Naive thymus-derived CD4-positive, alpha-beta T cell (primary cell): ENCODE measurements at regions of chr4 and their contacts with region 1.

Region 1: DNA sequence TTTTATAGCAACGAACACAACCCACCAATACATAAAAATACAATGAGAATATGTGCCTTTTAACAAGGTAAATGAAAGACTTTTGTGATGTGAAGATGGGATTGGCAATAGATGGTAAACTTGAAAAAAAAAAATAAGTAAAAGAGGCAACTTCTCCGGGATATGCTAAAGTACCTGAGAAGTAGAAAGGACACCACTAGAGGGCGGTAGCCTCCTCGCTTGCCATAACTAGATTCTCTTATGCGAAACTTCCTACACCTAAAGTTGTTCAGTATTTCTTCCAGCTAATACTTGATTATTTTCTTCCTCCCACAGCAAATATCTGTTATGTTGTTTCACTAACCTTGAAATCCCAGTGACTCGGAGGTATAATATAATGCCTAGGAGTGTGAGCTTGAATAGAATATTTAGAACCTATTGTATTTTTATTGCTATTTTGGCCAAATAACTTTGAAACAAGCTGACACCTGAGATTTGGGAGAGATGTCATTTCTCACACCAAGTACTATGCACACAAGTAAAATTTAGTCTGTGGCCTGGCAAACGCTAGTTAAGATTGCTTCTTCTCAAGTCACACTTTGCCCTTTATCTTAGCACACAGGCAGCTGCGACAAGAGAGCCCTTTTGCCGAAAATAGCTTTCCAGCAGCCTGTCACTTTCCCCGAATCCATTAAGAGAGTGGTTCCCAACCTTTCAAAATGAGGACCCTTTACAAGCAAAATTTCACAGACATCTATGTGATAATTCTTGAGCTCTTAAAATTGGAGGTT is 44.9 kb upstream of the PDLIM5 start:
- DNase-seq: peak; percentile 6 to 64 (median 48)
- ATAC-seq: peak; percentile 80
- H3K4me3 ChIP-seq: no peak overlapping the region
- H3K4me3 Mint-ChIP-seq: no peak overlapping the region
- H3K27ac ChIP-seq: no peak overlapping the region
- H3K27ac Mint-ChIP-seq: no peak overlapping the region
- H3K4me1 ChIP-seq: no peaks in the 10 kb centered on the region
- H3K4me1 Mint-ChIP-seq: no peaks in the 10 kb centered on the region
- H3K27me3 ChIP-seq: no peaks in the 10 kb centered on the region
- H3K27me3 Mint-ChIP-seq: peaks cover 0 to 21% (median 5%) of the 10 kb centered on the region in 5 donors

Region 2: GRCh38 chr4:93764639-93765246 is 642.1 kb before region 1 on chr4:
- CTCF ChIA-PET with region 1: no interaction called
- POLR2A ChIA-PET with region 1: no interaction called
- intact Hi-C with region 1: no loop called
- DNase-seq: no peak
- ATAC-seq: no peak
- H3K4me3 ChIP-seq: no peak overlapping the region
- H3K4me3 Mint-ChIP-seq: no peak overlapping the region
- H3K27ac ChIP-seq: no peak overlapping the region
- H3K27ac Mint-ChIP-seq: no peak overlapping the region
- H3K4me1 ChIP-seq: no peaks in the 10 kb centered on the region
- H3K4me1 Mint-ChIP-seq: no peaks in the 10 kb centered on the region
- H3K27me3 ChIP-seq: no peaks in the 10 kb centered on the region
- H3K27me3 Mint-ChIP-seq: peaks cover 0 to 5% (median 0%) of the 10 kb centered on the region in 5 donors

Region 3: GRCh38 chr4:94304365-94304971 is 102.4 kb before region 1 on chr4:
- CTCF ChIA-PET with region 1: no interaction called
- POLR2A ChIA-PET with region 1: no interaction called
- intact Hi-C with region 1: loop called in 1 of 2 experiments (anchors 5 kb)
- DNase-seq: peak in 4 of 9 donors; percentile 7 to 14 (median 11)
- ATAC-seq: no peak
- H3K4me3 ChIP-seq: no peak overlapping the region
- H3K4me3 Mint-ChIP-seq: no peak overlapping the region
- H3K27ac ChIP-seq: no peak overlapping the region
- H3K27ac Mint-ChIP-seq: no peak overlapping the region
- H3K4me1 ChIP-seq: no peaks in the 10 kb centered on the region
- H3K4me1 Mint-ChIP-seq: no peaks in the 10 kb centered on the region
- H3K27me3 ChIP-seq: no peaks in the 10 kb centered on the region
- H3K27me3 Mint-ChIP-seq: no peaks in the 10 kb centered on the region

Region 4: DNA sequence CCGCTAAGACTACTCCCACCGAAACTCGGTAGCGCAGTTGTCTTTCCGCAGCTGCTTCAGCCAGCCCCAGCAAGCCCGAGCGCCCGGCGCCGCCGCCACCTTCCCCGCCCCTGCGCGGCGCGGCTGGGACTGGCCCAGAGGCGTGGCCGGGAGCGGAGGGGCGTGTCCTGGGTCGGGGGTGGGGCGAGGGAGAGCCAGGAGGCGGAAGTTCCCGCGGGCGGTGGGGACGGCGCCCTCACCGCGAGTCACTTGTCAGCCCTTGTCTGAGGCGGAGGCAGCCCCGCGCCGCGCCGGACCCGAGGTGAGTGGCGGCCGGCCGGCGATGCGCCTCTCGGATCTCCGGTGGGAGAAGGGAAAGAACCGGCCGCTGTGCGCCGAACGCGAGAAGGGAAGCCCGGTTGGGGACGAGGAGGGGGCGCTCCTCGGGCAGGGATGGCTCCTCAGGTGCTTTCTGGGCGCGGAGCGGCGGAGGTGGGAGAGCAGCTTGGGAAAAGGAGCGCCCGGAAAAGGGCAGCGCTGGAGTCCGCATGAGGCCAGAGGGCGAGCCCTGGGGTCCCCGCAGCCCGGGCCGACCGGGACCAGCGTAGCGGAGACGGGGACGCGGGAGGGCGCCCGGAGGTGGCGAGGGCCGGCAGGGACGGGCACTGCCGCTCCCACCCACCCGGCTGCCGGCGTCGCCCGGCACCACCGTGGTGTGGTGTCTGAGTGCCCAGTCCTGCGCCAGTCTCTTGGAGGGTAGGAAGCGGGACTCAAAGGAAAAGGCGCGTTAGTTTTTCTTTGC is 45.0 kb after region 1 on chr4 and contains the start of gene PDLIM5:
- CTCF ChIA-PET with region 1: no interaction called
- POLR2A ChIA-PET with region 1: no interaction called
- intact Hi-C with region 1: loop called (anchors 1 to 5 kb)
- DNase-seq: peak; percentile 80 to 93 (median 88)
- ATAC-seq: peak; percentile 98
- H3K4me3 ChIP-seq: peak within 1 kb of the TSS; percentile 78
- H3K4me3 Mint-ChIP-seq: peak within 1 kb of the TSS; percentile 87 to 95 (median 92)
- H3K27ac ChIP-seq: peak within 1 kb of the TSS; percentile 63
- H3K27ac Mint-ChIP-seq: peak within 1 kb of the TSS; percentile 58 to 86 (median 77)
- H3K4me1 ChIP-seq: peaks cover 5 to 17% of the 10 kb centered on the region in 2 donors
- H3K4me1 Mint-ChIP-seq: peaks cover 16 to 33% (median 29%) of the 10 kb centered on the region in 7 donors
- H3K27me3 ChIP-seq: peaks cover 0 to 3% of the 10 kb centered on the region in 2 donors
- H3K27me3 Mint-ChIP-seq: peaks cover 10 to 43% (median 21%) of the 10 kb centered on the region in 5 donors
- total RNA-seq, gene PDLIM5: 14.4 to 61.7 (median 31.4) TPM

Region 5: GRCh38 chr4:94595879-94596483 is 189.1 kb after region 1 on chr4:
- CTCF ChIA-PET with region 1: interaction called, 9 read pairs
- POLR2A ChIA-PET with region 1: no interaction called
- intact Hi-C with region 1: loop called (anchors 1 kb)
- DNase-seq: peak in 5 of 9 donors; percentile 26 to 41 (median 31)
- ATAC-seq: peak; percentile 65
- H3K4me3 ChIP-seq: no peak overlapping the region
- H3K4me3 Mint-ChIP-seq: no peak overlapping the region
- H3K27ac ChIP-seq: no peak overlapping the region
- H3K27ac Mint-ChIP-seq: no peak overlapping the region
- H3K4me1 ChIP-seq: no peaks in the 10 kb centered on the region
- H3K4me1 Mint-ChIP-seq: no peaks in the 10 kb centered on the region
- H3K27me3 ChIP-seq: no peaks in the 10 kb centered on the region
- H3K27me3 Mint-ChIP-seq: no peaks in the 10 kb centered on the region

Region 6: GRCh38 chr4:95095348-95095974 is 688.6 kb after region 1 on chr4:
- CTCF ChIA-PET with region 1: no interaction called
- POLR2A ChIA-PET with region 1: no interaction called
- intact Hi-C with region 1: loop called in 1 of 2 experiments (anchors 5 kb)
- DNase-seq: peak in 2 of 9 donors; percentile 17 to 29
- ATAC-seq: no peak
- H3K4me3 ChIP-seq: no peak overlapping the region
- H3K4me3 Mint-ChIP-seq: no peak overlapping the region
- H3K27ac ChIP-seq: no peak overlapping the region
- H3K27ac Mint-ChIP-seq: no peak overlapping the region
- H3K4me1 ChIP-seq: no peaks in the 10 kb centered on the region
- H3K4me1 Mint-ChIP-seq: peaks cover 0 to 18% (median 8%) of the 10 kb centered on the region in 7 donors
- H3K27me3 ChIP-seq: no peaks in the 10 kb centered on the region
- H3K27me3 Mint-ChIP-seq: peaks cover 0 to 19% (median 0%) of the 10 kb centered on the region in 5 donors